ENCODE measurements at regions of chr3 and their contacts with region 1.

Region 1: GRCh38 chr3:187738331-187739093 is 6.8 kb downstream of the BCL6 start:
- DNase-seq: peak; percentile 42 to 88
- ATAC-seq: peak; percentile 53 to 66 (median 56)
- H3K4me3 ChIP-seq: peak overlapping the region; percentile 90
- H3K4me3 Mint-ChIP-seq: peak overlapping the region; percentile 99
- H3K27ac ChIP-seq: peak overlapping the region; percentile 78
- H3K27ac Mint-ChIP-seq: peak overlapping the region; percentile 97 to 100
- H3K4me1 ChIP-seq: peaks cover 57% of the 10 kb centered on the region
- H3K4me1 Mint-ChIP-seq: peaks cover 57 to 60% of the 10 kb centered on the region in 2 donors
- H3K27me3 ChIP-seq: no peaks in the 10 kb centered on the region
- H3K27me3 Mint-ChIP-seq: no peaks in the 10 kb centered on the region
- CTCF ChIP-seq: peak; percentile 71

Region 2: DNA sequence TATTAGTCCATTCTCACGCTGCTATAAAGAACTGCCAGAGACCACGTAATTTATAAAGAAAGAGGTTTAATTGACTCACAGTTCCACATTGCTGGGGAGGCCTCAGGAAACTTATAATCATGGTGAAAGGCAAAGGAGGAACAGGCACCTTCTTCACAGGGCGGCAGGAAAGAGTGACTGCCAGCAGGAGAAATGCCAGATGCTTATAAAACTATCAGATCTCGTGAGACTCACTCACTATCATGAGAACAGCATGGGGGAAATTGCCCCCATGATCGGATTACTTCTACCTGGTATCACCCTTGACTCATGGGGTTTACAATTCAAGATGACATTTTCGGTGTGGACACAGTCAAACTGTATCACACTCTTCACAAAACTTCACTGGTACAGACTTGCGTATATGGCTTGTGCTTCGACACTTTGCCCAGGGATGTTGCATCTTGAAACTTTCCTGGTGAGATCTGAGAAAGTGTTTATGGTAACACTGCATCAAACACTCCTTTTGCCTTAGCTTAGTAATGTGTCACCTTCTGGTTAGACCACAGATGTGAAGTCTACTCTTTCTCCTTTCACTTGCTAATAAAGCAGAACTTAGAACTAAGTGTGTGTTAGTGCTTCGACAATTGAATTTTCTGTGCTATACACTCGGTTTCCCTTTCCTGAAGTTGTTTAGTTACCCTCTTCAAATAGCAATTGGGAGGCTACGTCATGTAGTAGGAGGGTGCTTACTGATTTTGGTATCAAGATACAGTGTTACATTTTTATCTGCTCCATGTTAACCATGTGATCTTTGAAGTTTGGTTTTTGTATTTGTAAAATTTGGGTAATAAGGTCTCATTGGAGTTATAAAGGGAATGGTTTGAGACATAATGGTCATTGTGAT is 601.1 kb after region 1 on chr3:
- intact Hi-C with region 1: loop called (anchors 1 kb)
- DNase-seq: peak; percentile 37 to 69
- ATAC-seq: peak; percentile 83 to 93 (median 91)
- H3K4me3 ChIP-seq: no peak overlapping the region
- H3K4me3 Mint-ChIP-seq: peak overlapping the region; percentile 79
- H3K27ac ChIP-seq: peak overlapping the region; percentile 62
- H3K27ac Mint-ChIP-seq: peak overlapping the region; percentile 82
- H3K4me1 ChIP-seq: peaks cover 7% of the 10 kb centered on the region
- H3K4me1 Mint-ChIP-seq: peaks cover 44 to 55% of the 10 kb centered on the region in 2 donors
- H3K27me3 ChIP-seq: no peaks in the 10 kb centered on the region
- H3K27me3 Mint-ChIP-seq: peaks cover 0 to 9% of the 10 kb centered on the region in 2 donors
- CTCF ChIP-seq: no peak

Region 3: DNA sequence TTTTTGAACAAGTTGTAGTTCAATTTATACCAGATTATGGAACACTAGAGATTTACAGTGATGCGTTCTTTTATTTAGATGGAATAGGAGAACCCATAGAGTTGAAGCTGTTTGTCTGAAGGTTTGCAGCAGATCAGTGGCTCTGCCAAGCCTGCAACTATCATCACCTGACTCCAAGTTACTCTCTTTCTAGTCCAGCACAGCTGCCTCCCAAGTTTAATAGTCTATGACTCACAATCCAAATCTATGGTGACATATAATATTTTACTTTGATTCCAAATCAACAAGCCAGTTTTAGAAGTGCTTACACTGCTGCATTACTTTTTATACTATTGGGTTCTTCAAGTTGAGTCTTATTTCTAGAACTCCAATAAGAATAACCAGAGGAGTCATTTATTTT is 815.9 kb after region 1 on chr3:
- intact Hi-C with region 1: loop called (anchors 1 kb)
- DNase-seq: no peak
- ATAC-seq: peak in 1 of 3 donors; percentile 13
- H3K4me3 ChIP-seq: no peak overlapping the region
- H3K4me3 Mint-ChIP-seq: no peak overlapping the region
- H3K27ac ChIP-seq: peak overlapping the region; percentile 79
- H3K27ac Mint-ChIP-seq: no peak overlapping the region
- H3K4me1 ChIP-seq: peaks cover 23% of the 10 kb centered on the region
- H3K4me1 Mint-ChIP-seq: peaks cover 0 to 26% of the 10 kb centered on the region in 2 donors
- H3K27me3 ChIP-seq: no peaks in the 10 kb centered on the region
- H3K27me3 Mint-ChIP-seq: no peaks in the 10 kb centered on the region
- CTCF ChIP-seq: no peak

Region 4: DNA sequence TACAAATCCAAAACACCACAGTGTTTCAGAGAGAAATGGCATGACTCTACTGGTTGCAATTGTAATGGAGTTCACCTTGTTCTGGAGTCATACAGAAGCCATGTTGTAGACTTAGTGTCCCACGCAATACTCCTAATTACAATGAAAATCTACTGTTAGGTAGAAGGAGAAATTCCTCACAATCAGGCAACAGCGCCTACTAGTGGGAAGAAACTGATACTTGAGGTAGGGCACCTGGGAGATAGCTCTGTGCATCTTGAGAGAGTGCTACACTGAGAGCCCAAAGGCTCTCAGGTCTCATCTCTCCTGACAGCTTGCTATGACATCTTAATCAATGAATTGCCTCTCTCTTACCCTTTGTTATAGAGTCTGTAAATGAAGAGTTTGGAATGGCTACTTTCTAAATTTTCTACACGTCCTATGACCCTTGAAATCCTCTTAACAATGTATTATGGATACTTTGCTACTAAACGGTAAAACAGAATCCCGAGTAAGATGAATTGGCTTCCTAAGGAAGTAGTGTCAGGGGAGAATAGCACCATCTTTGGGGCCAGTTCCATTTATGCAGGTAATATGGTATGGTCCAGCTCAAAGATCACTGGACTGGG is 1010.6 kb after region 1 on chr3:
- intact Hi-C with region 1: loop called (anchors 1 kb)
- DNase-seq: peak; percentile 25 to 82
- ATAC-seq: peak; percentile 76 to 83 (median 82)
- H3K4me3 ChIP-seq: no peak overlapping the region
- H3K4me3 Mint-ChIP-seq: no peak overlapping the region
- H3K27ac ChIP-seq: no peak overlapping the region
- H3K27ac Mint-ChIP-seq: no peak overlapping the region
- H3K4me1 ChIP-seq: no peaks in the 10 kb centered on the region
- H3K4me1 Mint-ChIP-seq: peaks cover 13 to 16% of the 10 kb centered on the region in 2 donors
- H3K27me3 ChIP-seq: no peaks in the 10 kb centered on the region
- H3K27me3 Mint-ChIP-seq: no peaks in the 10 kb centered on the region
- CTCF ChIP-seq: peak; percentile 89

Region 5: DNA sequence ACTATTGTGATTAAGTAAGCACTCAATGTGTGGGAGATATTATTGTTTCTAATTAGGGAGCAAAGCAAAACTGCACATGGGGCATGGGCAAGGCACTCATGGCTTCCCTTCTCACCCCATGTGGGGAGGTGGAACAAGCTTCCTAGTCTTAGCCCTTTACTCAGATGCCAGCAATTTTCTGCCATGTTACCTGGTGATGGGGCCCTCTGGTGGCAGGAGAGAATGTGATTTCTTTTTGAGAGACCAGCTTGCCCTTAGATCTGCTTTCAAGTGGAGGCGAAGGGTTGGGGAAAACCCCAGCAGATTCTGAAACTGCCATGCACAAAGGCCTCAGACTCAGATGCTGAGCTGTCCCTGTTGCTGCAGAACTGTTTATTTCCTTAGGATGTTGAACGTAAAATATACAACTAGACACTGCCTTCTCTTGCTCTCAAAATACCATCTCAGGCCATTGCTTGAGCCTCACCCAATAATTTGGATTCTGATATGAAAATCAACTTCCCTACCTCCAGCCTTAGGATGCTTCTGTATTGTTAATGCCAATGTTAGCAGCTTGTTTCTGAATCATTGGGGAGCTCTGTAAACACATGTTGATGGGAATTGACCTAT is 1303.1 kb after region 1 on chr3:
- intact Hi-C with region 1: loop called (anchors 1 kb)
- DNase-seq: peak; percentile 33 to 89
- ATAC-seq: peak; percentile 80 to 92 (median 91)
- H3K4me3 ChIP-seq: no peak overlapping the region
- H3K4me3 Mint-ChIP-seq: no peak overlapping the region
- H3K27ac ChIP-seq: no peak overlapping the region
- H3K27ac Mint-ChIP-seq: no peak overlapping the region
- H3K4me1 ChIP-seq: no peaks in the 10 kb centered on the region
- H3K4me1 Mint-ChIP-seq: no peaks in the 10 kb centered on the region
- H3K27me3 ChIP-seq: no peaks in the 10 kb centered on the region
- H3K27me3 Mint-ChIP-seq: peaks cover 0 to 3% of the 10 kb centered on the region in 2 donors
- CTCF ChIP-seq: peak; percentile 40

Region 6: GRCh38 chr3:189148081-189148507 is 1409.6 kb after region 1 on chr3:
- intact Hi-C with region 1: loop called (anchors 1 kb)
- DNase-seq: peak; percentile 49 to 85
- ATAC-seq: peak; percentile 70 to 87 (median 82)
- H3K4me3 ChIP-seq: no peak overlapping the region
- H3K4me3 Mint-ChIP-seq: no peak overlapping the region
- H3K27ac ChIP-seq: no peak overlapping the region
- H3K27ac Mint-ChIP-seq: no peak overlapping the region
- H3K4me1 ChIP-seq: no peaks in the 10 kb centered on the region
- H3K4me1 Mint-ChIP-seq: peaks cover 13 to 15% of the 10 kb centered on the region in 2 donors
- H3K27me3 ChIP-seq: no peaks in the 10 kb centered on the region
- H3K27me3 Mint-ChIP-seq: peaks cover 10 to 12% of the 10 kb centered on the region in 2 donors
- CTCF ChIP-seq: peak; percentile 73

Measured in natural killer cell (primary cell).